Activated naive CD4-positive, alpha-beta T cell treated with anti-CD3 and anti-CD28 coated beads for 36 hours (primary cell): ENCODE measurements at regions of chr7 and their contacts with region 1.

Region 1: GRCh38 chr7:105808703-105809590 is 67.5 kb downstream of the ATXN7L1 start:
- DNase-seq: peak; percentile 96
- H3K4me3 Mint-ChIP-seq: no peak overlapping the region
- H3K27ac Mint-ChIP-seq: peak overlapping the region; percentile 38
- H3K4me1 Mint-ChIP-seq: peaks cover 58% of the 10 kb centered on the region
- H3K27me3 Mint-ChIP-seq: peaks cover 3% of the 10 kb centered on the region

Region 2: GRCh38 chr7:105209870-105210269 is 599.1 kb before region 1 on chr7:
- CTCF ChIA-PET with region 1: no interaction called
- intact Hi-C with region 1: loop called (anchors 5 kb)
- DNase-seq: peak; percentile 28
- H3K4me3 Mint-ChIP-seq: no peak overlapping the region
- H3K27ac Mint-ChIP-seq: no peak overlapping the region
- H3K4me1 Mint-ChIP-seq: peaks cover 65% of the 10 kb centered on the region
- H3K27me3 Mint-ChIP-seq: no peaks in the 10 kb centered on the region

Region 3: GRCh38 chr7:105673367-105674142 is 135.4 kb before region 1 on chr7:
- CTCF ChIA-PET with region 1: interaction called, 4 read pairs
- intact Hi-C with region 1: loop called (anchors 1 kb)
- DNase-seq: peak; percentile 24
- H3K4me3 Mint-ChIP-seq: no peak overlapping the region
- H3K27ac Mint-ChIP-seq: peak overlapping the region; percentile 76
- H3K4me1 Mint-ChIP-seq: peaks cover 61% of the 10 kb centered on the region
- H3K27me3 Mint-ChIP-seq: no peaks in the 10 kb centered on the region

Region 4: DNA sequence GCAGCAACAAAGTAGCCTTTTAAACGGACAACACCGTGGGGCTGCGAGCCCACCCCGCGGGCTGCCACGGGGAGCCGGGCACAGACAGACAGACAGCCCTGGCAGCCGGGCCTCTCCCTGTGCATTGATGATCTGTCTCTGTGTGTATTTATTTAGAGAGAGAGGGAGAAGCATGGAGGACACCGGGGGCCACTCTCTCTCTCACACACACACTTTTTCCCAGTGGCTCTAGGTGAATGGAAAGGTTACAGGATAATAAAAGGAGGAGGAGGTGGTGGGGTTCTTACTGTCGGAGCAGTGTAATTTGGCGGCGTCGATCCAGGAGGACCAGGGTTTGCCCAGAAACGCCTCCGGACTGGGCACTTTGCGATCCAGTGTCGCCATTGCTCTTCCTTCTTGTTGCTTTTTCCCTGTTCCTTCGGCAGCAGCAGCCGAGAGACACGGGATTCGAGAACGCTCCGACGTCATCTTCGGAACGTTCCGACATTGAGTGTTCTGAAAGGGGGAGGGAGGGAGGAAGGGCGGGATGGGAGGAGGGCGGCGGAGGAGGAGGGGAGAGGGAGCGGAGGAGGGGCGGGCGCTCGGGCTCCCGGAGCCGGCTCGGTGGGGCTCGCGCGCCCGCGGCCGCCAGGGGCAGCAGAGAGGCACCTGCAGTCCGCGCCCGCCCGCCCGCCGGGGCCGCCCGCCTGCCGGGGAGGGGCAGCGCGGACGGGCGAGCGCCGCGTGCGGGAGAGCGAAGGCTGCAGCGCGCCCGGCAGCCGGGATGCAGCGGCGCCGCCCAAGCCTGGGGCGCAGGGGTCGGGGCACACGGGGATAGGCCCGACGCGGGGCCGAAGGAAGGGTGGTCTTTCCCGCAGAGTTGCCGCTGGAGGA is 67.4 kb after region 1 on chr7 and contains the start of gene ATXN7L1:
- CTCF ChIA-PET with region 1: interaction called, 4 read pairs
- intact Hi-C with region 1: loop called (anchors 1 kb)
- DNase-seq: peak; percentile 93
- H3K4me3 Mint-ChIP-seq: peak within 1 kb of the TSS; percentile 91
- H3K27ac Mint-ChIP-seq: peak within 1 kb of the TSS; percentile 82
- H3K4me1 Mint-ChIP-seq: peaks cover 58% of the 10 kb centered on the region
- H3K27me3 Mint-ChIP-seq: no peaks in the 10 kb centered on the region
- total RNA-seq, gene ATXN7L1: 8.8 to 9.2 TPM

Region 5: GRCh38 chr7:106022193-106022821 is 213.4 kb after region 1 on chr7:
- CTCF ChIA-PET with region 1: interaction called, 4 read pairs
- intact Hi-C with region 1: loop called (anchors 1 kb)
- DNase-seq: peak; percentile 82
- H3K4me3 Mint-ChIP-seq: peak overlapping the region; percentile 19
- H3K27ac Mint-ChIP-seq: peak overlapping the region; percentile 62
- H3K4me1 Mint-ChIP-seq: peaks cover 71% of the 10 kb centered on the region
- H3K27me3 Mint-ChIP-seq: no peaks in the 10 kb centered on the region

Region 6: GRCh38 chr7:106405697-106406141 is 596.8 kb after region 1 on chr7:
- CTCF ChIA-PET with region 1: no interaction called
- intact Hi-C with region 1: loop called (anchors 5 kb)
- DNase-seq: peak; percentile 53
- H3K4me3 Mint-ChIP-seq: no peak overlapping the region
- H3K27ac Mint-ChIP-seq: peak overlapping the region; percentile 50
- H3K4me1 Mint-ChIP-seq: peaks cover 32% of the 10 kb centered on the region
- H3K27me3 Mint-ChIP-seq: peaks cover 44% of the 10 kb centered on the region

Region 7: DNA sequence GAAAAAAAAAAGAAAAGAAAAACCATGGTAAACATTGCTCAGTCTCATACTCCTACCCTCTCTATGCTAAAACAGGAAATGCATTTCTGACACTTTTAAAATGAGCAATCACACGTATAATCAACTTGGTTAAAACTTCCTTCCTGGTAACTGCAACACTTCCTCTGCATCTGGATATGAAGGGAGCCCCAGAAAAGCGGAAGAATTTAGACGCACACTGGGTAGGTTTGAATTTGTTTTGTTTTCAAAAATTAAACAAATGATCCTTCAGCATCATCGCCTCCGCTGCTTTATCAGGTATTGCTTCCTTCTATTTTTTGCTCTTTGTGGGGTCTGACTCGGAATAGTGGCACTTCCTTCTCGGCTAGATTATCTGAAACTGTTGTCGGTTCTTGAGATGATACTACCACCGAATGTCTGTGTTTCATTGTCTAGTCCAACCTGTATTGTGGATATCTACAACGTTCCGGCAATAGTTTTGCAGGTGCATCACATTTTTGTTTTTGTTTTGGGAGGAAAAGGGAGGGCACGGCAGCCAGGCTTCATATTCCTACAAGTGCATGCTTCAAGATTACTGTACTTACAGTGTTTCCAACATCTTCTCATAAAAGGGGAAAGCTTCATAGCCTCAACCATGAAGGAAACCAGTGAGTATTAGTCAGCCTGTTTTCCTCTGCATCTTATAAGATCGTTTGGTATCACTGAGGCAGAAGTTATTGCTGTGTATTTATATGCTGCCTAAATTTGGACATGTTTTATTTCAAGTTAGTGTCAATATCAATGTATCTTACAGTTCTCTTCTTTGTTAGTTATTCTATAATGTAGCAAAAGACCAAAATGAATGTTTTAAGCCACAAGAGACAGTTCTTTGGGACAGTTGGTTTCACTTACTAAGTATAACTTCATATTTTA is 1056.4 kb after region 1 on chr7 and contains the start of gene PIK3CG:
- CTCF ChIA-PET with region 1: no interaction called
- intact Hi-C with region 1: loop called (anchors 1 kb)
- DNase-seq: no peak
- H3K4me3 Mint-ChIP-seq: peak within 1 kb of the TSS; percentile 79
- H3K27ac Mint-ChIP-seq: peak within 1 kb of the TSS; percentile 65
- H3K4me1 Mint-ChIP-seq: peaks cover 77% of the 10 kb centered on the region
- H3K27me3 Mint-ChIP-seq: no peaks in the 10 kb centered on the region
- total RNA-seq, gene PIK3CG: 3.6 to 3.8 TPM